OCI-LY7 (cell line): ENCODE measurements at regions of chr2 and their contacts with region 1.

Region 1: DNA sequence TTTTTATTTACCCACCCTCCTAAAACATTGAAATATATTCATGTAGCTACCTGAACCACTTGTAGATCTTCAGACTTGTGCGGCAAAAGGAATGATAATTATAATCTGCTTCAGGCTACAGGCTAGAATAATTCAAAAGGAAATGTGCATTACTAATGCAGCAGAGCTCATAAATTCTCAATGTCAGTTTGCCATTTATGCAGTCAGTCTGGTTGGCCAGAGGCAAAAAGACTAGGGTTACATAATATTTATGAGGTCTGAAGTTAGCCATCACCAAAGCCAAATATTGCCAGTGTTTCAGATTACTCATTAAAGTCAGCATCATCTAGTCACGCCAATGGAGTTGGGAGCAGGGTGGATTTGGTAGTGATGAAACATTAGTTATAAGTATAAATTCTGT is 38.9 kb downstream of the METAP1D start:
- DNase-seq: no peak
- H3K4me3 ChIP-seq: no peak overlapping the region
- H3K27ac ChIP-seq: no peak overlapping the region
- H3K4me1 ChIP-seq: no peaks in the 10 kb centered on the region
- CTCF ChIP-seq: no peak

Region 2: GRCh38 chr2:172052000-172052983 is 13.7 kb after region 1 on chr2:
- CTCF ChIA-PET with region 1: no interaction called
- POLR2A ChIA-PET with region 1: interaction called, 14 read pairs
- intact Hi-C with region 1: no loop called
- DNase-seq: no peak
- H3K4me3 ChIP-seq: no peak overlapping the region
- H3K27ac ChIP-seq: no peak overlapping the region
- H3K4me1 ChIP-seq: no peaks in the 10 kb centered on the region
- CTCF ChIP-seq: no peak

Region 3: DNA sequence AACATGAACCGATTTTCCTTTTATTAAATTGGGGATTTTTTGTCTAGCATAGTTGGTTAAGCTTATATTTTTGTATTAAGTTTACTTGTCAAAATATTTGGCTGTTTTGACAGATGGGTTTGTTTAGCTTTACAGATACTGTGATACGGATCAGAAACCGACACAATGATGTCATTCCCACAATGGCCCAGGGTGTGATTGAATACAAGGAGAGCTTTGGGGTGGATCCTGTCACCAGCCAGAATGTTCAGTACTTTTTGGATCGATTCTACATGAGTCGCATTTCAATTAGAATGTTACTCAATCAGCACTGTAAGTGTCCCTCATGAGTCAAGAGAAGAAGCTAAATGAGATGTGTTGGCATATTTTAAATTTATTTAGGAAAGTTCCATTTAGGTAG is 525.8 kb after region 1 on chr2:
- CTCF ChIA-PET with region 1: no interaction called
- POLR2A ChIA-PET with region 1: no interaction called
- intact Hi-C with region 1: no loop called
- DNase-seq: no peak
- H3K4me3 ChIP-seq: no peak overlapping the region
- H3K27ac ChIP-seq: no peak overlapping the region
- H3K4me1 ChIP-seq: no peaks in the 10 kb centered on the region
- CTCF ChIP-seq: no peak

Region 4: DNA sequence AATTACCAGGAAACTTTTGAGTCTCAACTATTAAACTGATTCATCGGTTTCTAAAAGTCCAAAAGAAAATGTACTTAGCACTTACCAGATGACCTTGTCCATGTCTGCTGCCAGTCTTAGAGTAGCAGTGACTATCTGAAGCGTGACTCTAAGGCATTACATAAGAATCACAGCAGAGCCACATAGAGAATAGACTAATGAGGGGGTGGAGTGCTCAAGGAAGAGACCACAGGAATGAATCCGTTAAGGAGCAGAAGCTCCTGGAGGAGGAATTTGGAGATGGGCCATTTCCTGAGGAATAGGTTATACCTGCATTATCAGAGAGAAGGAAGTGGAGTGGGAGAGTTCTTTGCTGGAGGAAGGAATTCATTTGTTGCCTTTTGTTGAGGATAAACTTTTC is 1153.0 kb after region 1 on chr2:
- CTCF ChIA-PET with region 1: no interaction called
- POLR2A ChIA-PET with region 1: no interaction called
- intact Hi-C with region 1: loop called (anchors 10 kb)
- DNase-seq: no peak
- H3K4me3 ChIP-seq: no peak overlapping the region
- H3K27ac ChIP-seq: no peak overlapping the region
- H3K4me1 ChIP-seq: no peaks in the 10 kb centered on the region
- CTCF ChIP-seq: no peak